T-cell (primary cell): ENCODE measurements at regions of chr2 and their contacts with region 1.

Region 1: GRCh38 chr2:198309673-198310280 is 505.4 kb downstream of the PLCL1 start:
- DNase-seq: peak in 32 of 35 experiments; percentile 6 to 77 (median 39)
- ATAC-seq: no peak
- H3K4me3 ChIP-seq: no peak overlapping the region
- H3K4me3 Mint-ChIP-seq: no peak overlapping the region
- H3K27ac ChIP-seq: no peak overlapping the region
- H3K27ac Mint-ChIP-seq: no peak overlapping the region
- H3K4me1 ChIP-seq: no peaks in the 10 kb centered on the region
- H3K4me1 Mint-ChIP-seq: peaks cover 0 to 3% (median 0%) of the 10 kb centered on the region in 3 donors
- H3K27me3 ChIP-seq: peaks cover 9% of the 10 kb centered on the region in 2 experiments
- H3K27me3 Mint-ChIP-seq: peaks cover 28 to 32% of the 10 kb centered on the region in 2 donors

Region 2: DNA sequence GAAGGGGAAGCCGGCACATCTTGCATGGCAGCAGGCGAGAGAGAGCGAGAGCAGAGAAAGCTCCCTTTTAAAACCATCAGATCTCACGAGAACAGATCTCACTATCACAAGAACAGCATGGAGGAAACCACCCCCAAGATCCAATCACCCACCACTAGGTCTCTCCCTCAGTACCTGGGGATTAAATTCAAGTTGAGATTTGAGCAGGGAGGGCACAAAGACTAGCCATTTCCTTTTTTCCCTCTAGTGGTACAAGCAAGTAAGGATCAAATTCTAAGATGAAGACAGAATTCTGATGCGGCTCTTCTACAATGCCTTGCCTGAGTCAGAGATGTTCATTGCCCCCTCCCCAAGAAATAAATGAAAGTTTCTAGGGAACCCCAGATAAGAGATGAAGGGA is 953.6 kb before region 1 on chr2:
- CTCF ChIA-PET with region 1: no interaction called
- POLR2A ChIA-PET with region 1: no interaction called
- DNase-seq: peak in 4 of 35 experiments; percentile 1 to 41 (median 6)
- ATAC-seq: peak in 3 of 4 experiments; percentile 42 to 69 (median 45)
- H3K4me3 ChIP-seq: no peak overlapping the region
- H3K4me3 Mint-ChIP-seq: peak overlapping the region; percentile 16 to 47 (median 28)
- H3K27ac ChIP-seq: no peak overlapping the region
- H3K27ac Mint-ChIP-seq: peak overlapping the region in 1 of 2 donors; percentile 50
- H3K4me1 ChIP-seq: peaks cover 3 to 4% of the 10 kb centered on the region in 2 experiments
- H3K4me1 Mint-ChIP-seq: peaks cover 24 to 25% (median 24%) of the 10 kb centered on the region in 3 donors
- H3K27me3 ChIP-seq: no peaks in the 10 kb centered on the region
- H3K27me3 Mint-ChIP-seq: no peaks in the 10 kb centered on the region

Region 3: DNA sequence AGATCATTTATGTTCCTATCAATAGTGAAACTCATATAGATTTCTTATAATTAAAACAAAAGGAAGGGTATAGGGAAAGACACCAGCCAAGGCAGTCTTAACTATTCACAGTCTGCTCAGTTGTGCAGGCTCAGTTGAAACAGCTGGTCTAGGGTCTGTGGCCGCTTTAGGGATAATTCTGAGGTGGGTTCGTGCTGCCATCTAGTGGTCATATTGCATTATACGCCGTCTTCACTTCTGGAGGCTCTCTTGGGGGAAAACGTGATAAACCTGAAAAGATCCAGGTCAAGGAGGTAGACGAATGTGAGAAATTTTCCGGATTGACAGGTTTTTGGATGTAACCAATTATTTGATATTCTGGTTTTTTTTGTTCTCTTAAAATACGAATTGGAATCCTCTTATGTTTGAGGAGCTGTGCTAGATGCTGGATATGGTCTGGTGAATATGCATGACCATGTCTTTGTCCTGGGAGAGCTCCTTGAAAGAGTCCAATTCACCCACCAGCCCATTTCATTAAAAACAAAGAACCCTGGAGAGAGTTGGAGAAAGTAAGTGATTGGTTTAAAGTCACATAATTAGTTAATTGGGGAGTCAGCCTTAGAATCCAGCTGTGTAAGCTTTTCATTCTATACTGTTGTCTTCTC is 13.0 kb before region 1 on chr2:
- CTCF ChIA-PET with region 1: interaction called, 6 to 42 read pairs
- POLR2A ChIA-PET with region 1: interaction called in 1 of 2 experiments, 4 read pairs
- DNase-seq: peak in 31 of 35 experiments; percentile 19 to 79 (median 44)
- ATAC-seq: peak; percentile 76 to 87 (median 80)
- H3K4me3 ChIP-seq: no peak overlapping the region
- H3K4me3 Mint-ChIP-seq: no peak overlapping the region
- H3K27ac ChIP-seq: no peak overlapping the region
- H3K27ac Mint-ChIP-seq: no peak overlapping the region
- H3K4me1 ChIP-seq: no peaks in the 10 kb centered on the region
- H3K4me1 Mint-ChIP-seq: peaks cover 0 to 4% (median 3%) of the 10 kb centered on the region in 3 donors
- H3K27me3 ChIP-seq: peaks cover 0 to 17% of the 10 kb centered on the region in 2 experiments
- H3K27me3 Mint-ChIP-seq: peaks cover 11 to 14% of the 10 kb centered on the region in 2 donors

Region 4: DNA sequence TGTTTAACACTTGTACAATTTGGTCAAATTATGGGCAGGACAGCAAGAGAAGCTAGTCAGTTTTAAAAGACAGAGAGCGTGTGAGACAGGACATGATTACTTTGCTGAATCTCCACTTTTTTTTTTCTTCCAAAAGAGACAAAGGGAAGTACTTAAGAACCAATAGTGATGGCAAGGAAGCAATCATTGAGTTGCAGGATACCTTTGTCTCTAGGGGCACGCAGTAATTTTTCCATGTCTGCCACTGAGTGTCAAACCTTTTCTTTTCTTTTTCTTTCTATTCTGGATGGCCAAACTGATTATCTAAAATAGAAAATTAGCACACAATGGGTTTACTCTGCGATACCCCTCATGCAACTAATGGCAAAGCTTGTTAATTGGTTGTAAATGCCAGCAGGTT is 27.6 kb after region 1 on chr2:
- CTCF ChIA-PET with region 1: interaction called, 6 to 10 read pairs
- POLR2A ChIA-PET with region 1: no interaction called
- DNase-seq: no peak
- ATAC-seq: no peak
- H3K4me3 ChIP-seq: no peak overlapping the region
- H3K4me3 Mint-ChIP-seq: no peak overlapping the region
- H3K27ac ChIP-seq: no peak overlapping the region
- H3K27ac Mint-ChIP-seq: no peak overlapping the region
- H3K4me1 ChIP-seq: no peaks in the 10 kb centered on the region
- H3K4me1 Mint-ChIP-seq: no peaks in the 10 kb centered on the region
- H3K27me3 ChIP-seq: peaks cover 3% of the 10 kb centered on the region in 2 experiments
- H3K27me3 Mint-ChIP-seq: peaks cover 23% of the 10 kb centered on the region in 2 donors

Region 5: GRCh38 chr2:199488772-199489400 is 1179.1 kb after region 1 on chr2:
- CTCF ChIA-PET with region 1: interaction called, 15 to 55 read pairs
- POLR2A ChIA-PET with region 1: no interaction called
- DNase-seq: peak in 21 of 35 experiments; percentile 9 to 64 (median 28)
- ATAC-seq: no peak
- H3K4me3 ChIP-seq: no peak overlapping the region
- H3K4me3 Mint-ChIP-seq: no peak overlapping the region
- H3K27ac ChIP-seq: no peak overlapping the region
- H3K27ac Mint-ChIP-seq: no peak overlapping the region
- H3K4me1 ChIP-seq: no peaks in the 10 kb centered on the region
- H3K4me1 Mint-ChIP-seq: peaks cover 0 to 2% (median 0%) of the 10 kb centered on the region in 3 donors
- H3K27me3 ChIP-seq: peaks cover 0 to 6% of the 10 kb centered on the region in 2 experiments
- H3K27me3 Mint-ChIP-seq: peaks cover 28 to 40% of the 10 kb centered on the region in 2 donors

Region 6: DNA sequence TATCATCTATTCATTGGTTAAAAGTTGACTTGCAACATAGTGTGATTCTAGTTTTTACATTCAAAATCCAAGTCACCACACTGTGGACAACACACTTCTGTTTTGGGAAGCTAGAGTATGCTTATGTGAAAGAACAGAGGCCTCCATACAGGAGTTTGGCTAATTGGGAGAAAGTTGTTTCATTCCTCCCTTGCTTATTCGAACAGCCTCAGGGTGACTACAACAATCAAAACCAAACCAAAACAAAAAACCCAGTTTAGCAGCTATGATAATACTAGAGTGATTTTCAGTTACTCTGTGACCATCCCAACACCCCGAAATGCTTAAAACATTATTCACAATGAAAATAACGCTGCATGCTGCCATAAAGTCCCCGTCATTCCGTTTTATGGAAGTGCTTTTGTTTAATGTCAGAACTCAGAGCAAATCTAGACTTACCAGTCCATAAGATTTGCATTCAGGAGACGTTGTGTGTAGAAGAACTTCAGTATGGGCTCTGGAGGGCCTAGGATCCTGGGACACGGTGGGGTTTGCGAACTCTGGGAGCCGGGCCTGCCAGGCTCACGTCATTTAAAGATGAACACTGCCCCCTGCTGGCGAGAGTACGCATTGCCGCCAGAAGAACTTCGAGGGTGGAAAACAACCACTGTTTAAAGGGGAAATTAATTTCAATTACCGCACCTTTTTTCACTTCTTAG is 1429.8 kb after region 1 on chr2:
- CTCF ChIA-PET with region 1: interaction called, 32 to 38 read pairs
- POLR2A ChIA-PET with region 1: no interaction called
- DNase-seq: peak in 31 of 35 experiments; percentile 6 to 64 (median 41)
- ATAC-seq: peak in 1 of 4 experiments; percentile 49
- H3K4me3 ChIP-seq: no peak overlapping the region
- H3K4me3 Mint-ChIP-seq: no peak overlapping the region
- H3K27ac ChIP-seq: no peak overlapping the region
- H3K27ac Mint-ChIP-seq: no peak overlapping the region
- H3K4me1 ChIP-seq: peaks cover 0 to 2% of the 10 kb centered on the region in 2 experiments
- H3K4me1 Mint-ChIP-seq: peaks cover 0 to 6% (median 4%) of the 10 kb centered on the region in 3 donors
- H3K27me3 ChIP-seq: peaks cover 0 to 11% of the 10 kb centered on the region in 2 experiments
- H3K27me3 Mint-ChIP-seq: peaks cover 17 to 24% of the 10 kb centered on the region in 2 donors